Right ventricle myocardium inferior (tissue), 1 donor: ENCODE measurements at regions of chr17 and their contacts with region 1.

Region 1: DNA sequence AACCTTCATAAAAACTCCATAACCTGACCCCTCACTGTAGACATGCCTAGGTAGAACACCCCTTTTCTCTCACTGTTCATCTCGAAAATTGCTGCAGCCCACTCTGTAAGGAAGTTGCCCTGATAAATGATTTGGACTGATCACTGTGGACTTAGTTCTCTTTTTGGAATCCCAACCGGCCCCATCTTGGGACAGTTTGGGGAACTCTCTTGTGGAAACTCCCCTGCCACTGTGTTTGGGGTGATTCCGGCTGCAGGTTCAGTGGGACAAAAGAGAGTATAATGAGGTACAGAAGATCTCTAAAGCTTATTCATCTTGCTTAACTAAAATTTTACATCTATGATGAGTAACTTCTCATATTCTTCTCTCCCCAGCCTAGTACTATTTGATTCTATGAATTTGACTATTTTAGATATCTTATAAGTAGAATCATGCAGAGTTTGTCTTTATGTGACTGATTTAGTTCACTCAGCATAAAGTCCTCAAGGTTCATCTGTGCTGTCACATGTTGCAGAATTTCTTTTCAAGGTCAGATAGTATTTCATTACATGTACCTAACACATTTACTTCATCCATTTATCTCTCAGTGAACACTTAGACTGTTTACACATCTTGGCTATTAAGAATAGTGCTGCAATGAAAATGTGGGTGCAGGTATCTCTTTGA is 84.9 kb downstream of the ABCA8 start:
- DNase-seq: no peak
- ATAC-seq: peak; percentile 12

Region 2: GRCh38 chr17:68821860-68822696 is 48.2 kb before region 1 on chr17:
- intact Hi-C with region 1: loop called (anchors 2 kb)
- DNase-seq: no peak
- ATAC-seq: no peak